Right cardiac atrium (tissue), 5 donors: ENCODE measurements at regions of chr5 and their contacts with region 1.

Region 1: GRCh38 chr5:72523960-72524582 is 16.9 kb upstream of the ZNF366 start:
- DNase-seq: no peak
- ATAC-seq: peak; percentile 55 to 79
- H3K4me3 ChIP-seq: no peak overlapping the region
- H3K27ac ChIP-seq: no peak overlapping the region
- H3K4me1 ChIP-seq: no peaks in the 10 kb centered on the region
- H3K27me3 ChIP-seq: no peaks in the 10 kb centered on the region

Region 2: GRCh38 chr5:72149742-72150141 is 374.3 kb before region 1 on chr5:
- intact Hi-C with region 1: no loop called
- DNase-seq: no peak
- ATAC-seq: no peak
- H3K4me3 ChIP-seq: no peak overlapping the region
- H3K27ac ChIP-seq: no peak overlapping the region
- H3K4me1 ChIP-seq: peaks cover 15% of the 10 kb centered on the region
- H3K27me3 ChIP-seq: no peaks in the 10 kb centered on the region

Region 3: GRCh38 chr5:72210888-72211678 is 313.0 kb before region 1 on chr5:
- intact Hi-C with region 1: no loop called
- DNase-seq: peak; percentile 72 to 86 (median 82)
- ATAC-seq: peak; percentile 80 to 82
- H3K4me3 ChIP-seq: no peak overlapping the region
- H3K27ac ChIP-seq: peak overlapping the region; percentile 68
- H3K4me1 ChIP-seq: peaks cover 9% of the 10 kb centered on the region
- H3K27me3 ChIP-seq: no peaks in the 10 kb centered on the region

Region 4: DNA sequence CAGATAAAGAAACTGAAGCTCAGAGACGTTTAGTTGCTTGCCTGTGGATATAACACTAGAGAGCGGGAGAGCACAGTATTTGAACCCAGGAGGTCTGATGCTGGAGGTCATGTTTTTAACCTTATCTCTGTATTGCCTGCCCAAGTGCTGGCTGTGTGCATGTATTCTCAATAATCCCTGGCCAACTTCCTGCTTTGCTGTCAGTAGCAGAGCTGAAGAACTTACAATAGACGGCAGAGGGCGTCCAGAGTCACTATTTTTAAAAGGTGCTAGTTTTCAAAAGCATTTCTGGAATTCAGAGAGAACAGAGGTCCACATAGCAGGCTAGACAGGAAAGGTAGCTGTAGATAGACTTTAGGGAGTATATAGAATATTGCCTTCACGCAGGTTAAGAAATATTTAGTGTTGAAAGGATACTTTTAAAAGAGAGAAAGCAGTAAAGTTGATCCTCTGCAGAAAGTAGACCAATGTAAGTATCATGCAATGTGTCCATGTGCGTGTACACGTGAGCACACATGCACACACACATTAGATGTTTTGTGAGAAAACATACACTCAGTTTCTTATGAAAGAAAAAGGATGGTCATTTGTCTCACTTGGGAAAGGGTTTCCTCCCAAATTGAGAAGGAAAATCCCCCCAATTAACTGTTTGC is 157.6 kb before region 1 on chr5:
- intact Hi-C with region 1: loop called (anchors 1 to 10 kb)
- DNase-seq: peak; percentile 44 to 83 (median 56)
- ATAC-seq: peak; percentile 89 to 90
- H3K4me3 ChIP-seq: no peak overlapping the region
- H3K27ac ChIP-seq: no peak overlapping the region
- H3K4me1 ChIP-seq: no peaks in the 10 kb centered on the region
- H3K27me3 ChIP-seq: no peaks in the 10 kb centered on the region

Region 5: DNA sequence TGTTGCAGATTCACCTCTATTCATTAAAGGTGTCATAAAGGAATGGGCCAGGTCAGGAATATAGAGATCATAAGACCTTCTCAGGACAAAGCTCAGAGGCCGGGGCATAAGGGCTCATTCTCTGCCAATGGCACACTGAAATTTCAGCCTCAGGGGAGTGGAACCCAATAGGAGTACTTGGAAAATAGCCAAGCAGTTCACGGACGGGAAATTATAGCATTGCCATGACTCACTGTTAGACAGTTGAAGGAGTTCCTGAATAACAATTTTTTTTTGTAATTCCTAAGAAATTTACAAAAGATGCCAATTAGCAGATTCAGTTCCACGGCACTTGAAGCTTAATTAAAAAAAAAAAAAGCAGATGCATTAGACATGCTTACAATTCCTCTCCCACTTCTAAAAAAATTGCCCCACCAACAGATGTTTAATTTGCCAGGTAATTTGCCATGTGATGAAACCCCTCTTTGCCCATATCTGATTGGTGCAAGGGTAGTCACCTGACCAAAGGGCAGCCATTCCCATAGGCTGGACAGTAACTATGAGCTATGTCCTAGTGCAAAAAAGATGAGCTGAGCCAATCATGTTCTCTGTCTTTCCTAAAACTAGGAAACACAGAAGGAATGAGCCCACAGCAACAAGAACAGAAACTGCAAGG is 145.3 kb before region 1 on chr5:
- intact Hi-C with region 1: loop called in 2 of 4 experiments (anchors 5 to 10 kb)
- DNase-seq: peak in 1 of 3 donors; percentile 30
- ATAC-seq: peak; percentile 53 to 77
- H3K4me3 ChIP-seq: no peak overlapping the region
- H3K27ac ChIP-seq: no peak overlapping the region
- H3K4me1 ChIP-seq: peaks cover 6% of the 10 kb centered on the region
- H3K27me3 ChIP-seq: no peaks in the 10 kb centered on the region

Region 6: GRCh38 chr5:72572236-72572765 is 48.2 kb after region 1 on chr5:
- intact Hi-C with region 1: no loop called
- DNase-seq: no peak
- ATAC-seq: no peak
- H3K4me3 ChIP-seq: no peak overlapping the region
- H3K27ac ChIP-seq: no peak overlapping the region
- H3K4me1 ChIP-seq: no peaks in the 10 kb centered on the region
- H3K27me3 ChIP-seq: no peaks in the 10 kb centered on the region